Activated CD8-positive, alpha-beta T cell treated with anti-CD3 and anti-CD28 coated beads for 36 hours (primary cell): ENCODE measurements at regions of chr1 and their contacts with region 1.

Region 1: DNA sequence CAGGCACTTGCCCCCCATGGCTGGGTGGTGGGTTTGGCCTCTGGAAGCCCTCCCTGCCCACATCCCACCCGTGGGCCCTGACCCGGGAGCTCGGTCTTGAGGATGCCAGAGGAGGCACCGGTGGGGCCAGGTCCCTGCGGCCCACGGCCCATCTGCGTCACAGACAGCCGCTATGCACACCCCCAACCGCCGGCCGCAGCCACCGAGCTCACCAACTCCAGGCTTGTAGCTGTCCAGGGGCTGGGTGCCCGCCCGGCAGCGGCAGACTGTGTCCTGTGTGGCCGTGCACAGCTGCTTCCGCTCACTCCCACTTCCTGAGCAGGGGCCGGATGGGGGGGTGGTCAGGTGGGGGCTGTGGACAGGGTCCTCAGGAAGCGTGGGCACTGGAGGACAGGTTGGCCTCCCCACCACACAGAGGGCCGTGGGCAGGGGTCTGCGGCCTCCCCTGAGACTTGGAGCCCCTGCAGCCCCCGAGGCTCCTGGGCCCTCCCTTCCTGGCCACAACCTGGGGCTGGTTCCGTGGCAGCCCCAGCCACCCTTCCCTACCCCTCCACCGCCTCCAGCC is 1.1 kb downstream of the TNFRSF4 start:
- DNase-seq: peak; percentile 74
- ATAC-seq: peak; percentile 3
- H3K4me3 Mint-ChIP-seq: peak overlapping the region; percentile 76
- H3K27ac Mint-ChIP-seq: peak overlapping the region; percentile 52
- H3K4me1 Mint-ChIP-seq: peaks cover 53% of the 10 kb centered on the region
- H3K27me3 Mint-ChIP-seq: no peaks in the 10 kb centered on the region
- CTCF ChIP-seq: no peak

Region 2: GRCh38 chr1:1069709-1070676 is 142.9 kb before region 1 on chr1:
- CTCF ChIA-PET with region 1: no interaction called
- POLR2A ChIA-PET with region 1: no interaction called
- intact Hi-C with region 1: no loop called
- DNase-seq: peak; percentile 39
- ATAC-seq: no peak
- H3K4me3 Mint-ChIP-seq: peak overlapping the region; percentile 29
- H3K27ac Mint-ChIP-seq: no peak overlapping the region
- H3K4me1 Mint-ChIP-seq: peaks cover 17% of the 10 kb centered on the region
- H3K27me3 Mint-ChIP-seq: peaks cover 7% of the 10 kb centered on the region
- CTCF ChIP-seq: no peak

Region 3: DNA sequence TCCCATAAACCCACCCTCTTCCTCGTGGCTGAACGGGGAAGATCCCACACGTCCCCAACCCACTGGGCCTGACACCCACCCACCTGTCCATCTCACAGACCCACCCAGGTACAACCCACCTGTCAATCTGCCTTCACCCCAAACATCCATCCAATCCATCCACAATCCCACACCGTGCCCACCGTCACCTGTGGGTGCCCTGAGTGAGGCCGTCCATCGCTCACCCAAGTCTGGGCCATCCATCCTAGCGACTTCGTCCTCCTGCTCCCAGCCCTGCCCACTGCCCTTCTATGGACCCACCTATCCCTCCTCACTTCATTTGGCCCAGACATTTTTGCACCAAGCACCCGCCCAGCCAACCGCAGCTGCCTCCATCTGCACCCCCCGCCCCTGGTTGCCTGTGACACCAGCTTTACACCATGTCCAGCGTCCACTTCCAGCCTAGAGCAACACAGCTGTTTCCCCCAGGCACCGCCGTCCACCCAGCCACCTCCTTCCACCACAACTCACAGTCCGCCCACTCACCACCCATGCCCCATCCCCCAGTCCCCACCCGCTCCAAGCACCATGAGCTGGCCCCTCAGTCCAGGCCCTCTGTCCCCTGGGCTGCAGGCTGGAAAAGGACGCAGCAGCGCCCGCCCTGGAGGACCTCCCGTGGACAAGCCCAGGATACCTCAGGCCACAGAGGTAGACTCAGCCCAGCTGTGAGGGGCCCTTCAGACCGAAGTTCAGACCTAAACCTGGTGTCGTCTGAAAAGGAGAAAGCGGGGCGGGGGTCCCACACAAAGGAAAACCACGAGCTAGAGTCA is 31.5 kb before region 1 on chr1:
- CTCF ChIA-PET with region 1: no interaction called
- POLR2A ChIA-PET with region 1: no interaction called
- intact Hi-C with region 1: no loop called
- DNase-seq: no peak
- ATAC-seq: no peak
- H3K4me3 Mint-ChIP-seq: no peak overlapping the region
- H3K27ac Mint-ChIP-seq: no peak overlapping the region
- H3K4me1 Mint-ChIP-seq: peaks cover 2% of the 10 kb centered on the region
- H3K27me3 Mint-ChIP-seq: peaks cover 6% of the 10 kb centered on the region
- CTCF ChIP-seq: no peak

Region 4: DNA sequence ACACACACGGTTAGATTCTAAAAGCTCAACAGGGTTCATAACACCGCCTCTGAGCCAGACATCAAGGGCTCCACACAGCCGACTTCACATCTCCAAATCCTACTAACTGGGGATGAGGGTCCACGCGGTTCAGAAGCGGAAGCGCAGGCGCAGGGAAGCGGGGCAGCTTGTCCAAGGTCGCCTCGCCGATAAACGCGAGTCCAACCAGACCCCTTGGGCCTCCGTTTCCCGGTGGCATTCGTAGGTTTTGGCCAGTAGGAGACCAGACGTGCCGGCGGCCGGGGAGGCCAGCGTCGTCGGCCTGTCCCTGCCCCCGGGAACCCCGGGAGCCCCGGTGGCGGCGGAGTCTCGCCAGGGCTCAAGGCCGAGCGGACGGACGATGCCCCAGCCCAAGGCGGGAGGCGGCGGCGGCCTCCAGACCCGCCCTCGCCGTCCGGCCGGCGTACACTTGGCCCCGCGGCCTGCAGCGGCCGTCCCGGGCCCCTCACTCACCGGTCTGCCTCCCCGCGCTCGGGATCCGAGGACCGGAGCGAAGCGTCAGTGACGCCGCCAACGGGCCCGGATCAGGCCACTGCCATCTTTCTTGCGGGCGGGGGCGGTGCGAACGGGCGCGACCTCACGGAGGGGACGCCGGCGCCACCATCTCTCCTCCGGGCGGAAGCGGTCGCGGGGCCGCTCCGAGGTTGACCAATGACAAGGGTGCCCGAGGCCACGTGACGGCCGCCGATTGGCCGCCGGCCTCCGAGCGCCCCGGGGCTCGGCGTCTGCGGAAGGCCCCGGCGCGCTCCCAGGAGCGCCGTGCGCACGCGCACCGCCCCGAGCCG is 18.8 kb after region 1 on chr1 and contains the start of gene SDF4:
- CTCF ChIA-PET with region 1: interaction called, 4 read pairs
- POLR2A ChIA-PET with region 1: interaction called, 64 read pairs
- intact Hi-C with region 1: no loop called
- DNase-seq: peak; percentile 97
- ATAC-seq: peak; percentile 98
- H3K4me3 Mint-ChIP-seq: peak within 1 kb of the TSS; percentile 95
- H3K27ac Mint-ChIP-seq: peak within 1 kb of the TSS; percentile 93
- H3K4me1 Mint-ChIP-seq: peaks cover 32% of the 10 kb centered on the region
- H3K27me3 Mint-ChIP-seq: no peaks in the 10 kb centered on the region
- CTCF ChIP-seq: no peak
- total RNA-seq, gene SDF4: 81.5 to 87.5 TPM

Region 5: DNA sequence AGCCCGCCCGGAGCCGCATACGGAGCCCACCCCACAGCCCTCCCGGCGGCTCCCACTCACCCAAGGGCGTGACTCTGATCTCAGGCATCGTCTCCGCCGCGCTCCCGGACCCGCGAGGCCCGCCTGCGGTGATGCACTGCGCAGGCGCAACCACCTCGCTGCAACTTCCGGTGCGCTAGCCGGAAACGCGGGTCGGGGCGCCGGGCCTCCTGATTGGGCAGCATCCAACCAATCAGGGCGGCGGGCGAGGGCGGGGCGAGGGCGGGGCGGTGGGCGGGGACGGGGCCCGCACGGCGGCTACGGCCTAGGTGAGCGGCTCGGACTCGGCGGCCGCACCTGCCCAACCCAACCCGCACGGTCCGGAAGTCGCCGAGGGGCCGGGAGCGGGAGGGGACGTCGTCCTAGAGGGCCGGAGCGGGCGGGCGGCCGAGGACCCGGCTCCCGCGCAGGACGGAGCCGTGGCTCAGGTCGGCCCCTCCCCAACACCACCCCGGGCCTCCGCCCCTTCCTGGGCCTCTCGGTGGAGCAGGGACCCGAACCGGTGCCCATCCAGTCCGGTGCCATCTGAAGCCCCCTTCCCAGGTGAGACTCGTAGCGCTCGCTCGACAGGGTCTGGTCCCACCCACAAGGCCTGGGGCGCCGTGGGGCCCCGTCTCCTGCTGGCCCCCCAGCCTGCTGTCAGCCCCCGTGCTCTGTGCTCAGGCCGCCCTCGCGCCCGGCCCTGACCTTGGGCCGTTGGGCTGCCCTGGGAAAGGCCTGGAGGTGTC is 111.8 kb after region 1 on chr1 and contains the starts of genes CPTP and INTS11:
- CTCF ChIA-PET with region 1: no interaction called
- POLR2A ChIA-PET with region 1: no interaction called
- intact Hi-C with region 1: no loop called
- DNase-seq: peak; percentile 96
- ATAC-seq: peak; percentile 93
- H3K4me3 Mint-ChIP-seq: peak within 1 kb of the TSS; percentile 93
- H3K27ac Mint-ChIP-seq: peak within 1 kb of the TSS; percentile 91
- H3K4me1 Mint-ChIP-seq: peaks cover 30% of the 10 kb centered on the region
- H3K27me3 Mint-ChIP-seq: no peaks in the 10 kb centered on the region
- CTCF ChIP-seq: no peak
- total RNA-seq, gene CPTP: 8.4 to 11.0 TPM
- total RNA-seq, gene INTS11: 110 to 122 TPM